ENCODE measurements at regions of chr11 and their contacts with region 1.

Region 1: GRCh38 chr11:58675334-58676155 is 53.1 kb downstream of the CNTF start:
- DNase-seq: peak; percentile 66 to 84
- ATAC-seq: peak; percentile 82 to 90 (median 89)
- H3K4me3 ChIP-seq: no peak overlapping the region
- H3K4me3 Mint-ChIP-seq: no peak overlapping the region
- H3K27ac ChIP-seq: no peak overlapping the region
- H3K27ac Mint-ChIP-seq: no peak overlapping the region
- H3K4me1 ChIP-seq: no peaks in the 10 kb centered on the region
- H3K4me1 Mint-ChIP-seq: no peaks in the 10 kb centered on the region
- H3K27me3 ChIP-seq: peaks cover 2% of the 10 kb centered on the region
- H3K27me3 Mint-ChIP-seq: peaks cover 0 to 7% of the 10 kb centered on the region in 2 donors
- CTCF ChIP-seq: peak; percentile 89

Region 2: DNA sequence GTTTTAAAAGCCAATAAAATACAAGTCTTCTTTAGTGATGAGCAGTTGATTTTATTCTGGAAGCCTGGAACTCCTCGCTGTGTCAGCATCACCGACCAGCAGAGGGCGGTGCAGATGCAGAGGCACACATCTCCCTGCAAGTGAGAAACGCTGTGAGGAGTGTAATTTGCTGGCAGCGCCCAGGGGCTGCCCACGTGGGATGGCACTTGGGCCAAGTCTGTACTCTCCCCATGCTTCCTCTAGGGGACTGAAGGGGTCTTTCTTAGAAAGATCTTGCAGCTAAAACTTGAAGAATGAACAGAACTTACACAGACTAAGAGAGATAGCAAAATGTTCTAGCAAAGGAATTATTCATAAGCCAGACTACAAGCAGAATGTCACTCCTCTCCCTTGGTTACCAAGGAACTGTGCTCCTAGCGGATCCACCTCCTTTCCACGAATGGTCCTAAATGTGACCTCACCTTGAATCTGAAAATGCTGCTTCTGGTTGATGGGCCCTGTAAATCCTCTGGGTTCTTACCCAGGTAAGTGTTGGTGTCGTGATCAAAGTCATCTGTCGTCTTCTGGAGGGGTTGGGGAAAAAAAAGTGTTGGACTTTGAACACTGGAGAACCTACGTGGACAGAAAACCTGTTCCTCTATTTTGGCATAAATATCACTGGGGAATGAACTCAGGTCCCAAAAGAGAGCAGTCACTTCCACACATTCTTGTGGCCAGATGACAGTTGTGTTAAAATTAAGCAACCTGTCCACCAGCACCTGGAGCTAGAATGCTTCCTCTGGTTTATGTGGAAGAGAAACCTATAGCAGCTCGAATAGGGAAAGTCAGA is 21.3 kb before region 1 on chr11:
- intact Hi-C with region 1: loop called (anchors 1 kb)
- DNase-seq: peak; percentile 64 to 87
- ATAC-seq: peak; percentile 91 to 100 (median 99)
- H3K4me3 ChIP-seq: no peak overlapping the region
- H3K4me3 Mint-ChIP-seq: no peak overlapping the region
- H3K27ac ChIP-seq: no peak overlapping the region
- H3K27ac Mint-ChIP-seq: no peak overlapping the region
- H3K4me1 ChIP-seq: no peaks in the 10 kb centered on the region
- H3K4me1 Mint-ChIP-seq: peaks cover 0 to 5% of the 10 kb centered on the region in 2 donors
- H3K27me3 ChIP-seq: no peaks in the 10 kb centered on the region
- H3K27me3 Mint-ChIP-seq: peaks cover 0 to 6% of the 10 kb centered on the region in 2 donors
- CTCF ChIP-seq: peak; percentile 86